GM12878 (cell line): ENCODE measurements at regions of chr20 and their contacts with region 1.

Region 1: GRCh38 chr20:6767536-6768227 is at the start of gene BMP2:
- DNase-seq: no peak
- ATAC-seq: peak; percentile 58
- H3K4me3 ChIP-seq: 0 out of 2 replicates have a peak within 1 kb of the TSS, but pooled peaks have one; percentile 27
- H3K27ac ChIP-seq: no peak within 1 kb of the TSS
- H3K4me1 ChIP-seq: no peaks in the 10 kb centered on the region
- H3K27me3 ChIP-seq: peaks cover 0 to 10% of the 10 kb centered on the region in 2 experiments; a peak in 2 of 4 replicates
- CTCF ChIP-seq: no peak; a peak in 1 of 6 replicates
- EP300 ChIP-seq: no peak
- POLR2A ChIP-seq: no peak
- RAD21 ChIP-seq: no peak
- polyA plus RNA-seq, gene BMP2: 0.57 to 0.74 TPM

Region 2: GRCh38 chr20:6142348-6142993 is 625.2 kb before region 1 on chr20:
- CTCF ChIA-PET with region 1: interaction called, 3 read pairs
- POLR2A ChIA-PET with region 1: no interaction called
- RAD21 ChIA-PET with region 1: no interaction called
- SMC1A ChIA-PET with region 1: no interaction called
- in situ Hi-C with region 1: no loop called
- intact Hi-C with region 1: loop called (anchors 5 kb)
- DNase-seq: peak; percentile 9
- ATAC-seq: peak; percentile 91
- H3K4me3 ChIP-seq: no peak overlapping the region
- H3K27ac ChIP-seq: no peak overlapping the region
- H3K4me1 ChIP-seq: no peaks in the 10 kb centered on the region
- H3K27me3 ChIP-seq: no peaks in the 10 kb centered on the region
- CTCF ChIP-seq: peak; percentile 71 to 84 (median 76); a peak in 5 of 6 replicates
- EP300 ChIP-seq: no peak
- POLR2A ChIP-seq: no peak
- RAD21 ChIP-seq: peak; percentile 68

Region 3: GRCh38 chr20:6636209-6637159 is 131.2 kb before region 1 on chr20:
- CTCF ChIA-PET with region 1: interaction called, 25 read pairs
- POLR2A ChIA-PET with region 1: no interaction called
- RAD21 ChIA-PET with region 1: interaction called, 8 read pairs
- SMC1A ChIA-PET with region 1: interaction called, 11 read pairs
- in situ Hi-C with region 1: no loop called
- intact Hi-C with region 1: loop called (anchors 2 kb)
- DNase-seq: no peak
- ATAC-seq: peak; percentile 73
- H3K4me3 ChIP-seq: no peak overlapping the region
- H3K27ac ChIP-seq: no peak overlapping the region
- H3K4me1 ChIP-seq: no peaks in the 10 kb centered on the region
- H3K27me3 ChIP-seq: no peaks in the 10 kb centered on the region
- CTCF ChIP-seq: peak; percentile 24 to 54 (median 25); a peak in 3 of 6 replicates
- EP300 ChIP-seq: no peak
- POLR2A ChIP-seq: no peak
- RAD21 ChIP-seq: peak; percentile 36

Region 4: DNA sequence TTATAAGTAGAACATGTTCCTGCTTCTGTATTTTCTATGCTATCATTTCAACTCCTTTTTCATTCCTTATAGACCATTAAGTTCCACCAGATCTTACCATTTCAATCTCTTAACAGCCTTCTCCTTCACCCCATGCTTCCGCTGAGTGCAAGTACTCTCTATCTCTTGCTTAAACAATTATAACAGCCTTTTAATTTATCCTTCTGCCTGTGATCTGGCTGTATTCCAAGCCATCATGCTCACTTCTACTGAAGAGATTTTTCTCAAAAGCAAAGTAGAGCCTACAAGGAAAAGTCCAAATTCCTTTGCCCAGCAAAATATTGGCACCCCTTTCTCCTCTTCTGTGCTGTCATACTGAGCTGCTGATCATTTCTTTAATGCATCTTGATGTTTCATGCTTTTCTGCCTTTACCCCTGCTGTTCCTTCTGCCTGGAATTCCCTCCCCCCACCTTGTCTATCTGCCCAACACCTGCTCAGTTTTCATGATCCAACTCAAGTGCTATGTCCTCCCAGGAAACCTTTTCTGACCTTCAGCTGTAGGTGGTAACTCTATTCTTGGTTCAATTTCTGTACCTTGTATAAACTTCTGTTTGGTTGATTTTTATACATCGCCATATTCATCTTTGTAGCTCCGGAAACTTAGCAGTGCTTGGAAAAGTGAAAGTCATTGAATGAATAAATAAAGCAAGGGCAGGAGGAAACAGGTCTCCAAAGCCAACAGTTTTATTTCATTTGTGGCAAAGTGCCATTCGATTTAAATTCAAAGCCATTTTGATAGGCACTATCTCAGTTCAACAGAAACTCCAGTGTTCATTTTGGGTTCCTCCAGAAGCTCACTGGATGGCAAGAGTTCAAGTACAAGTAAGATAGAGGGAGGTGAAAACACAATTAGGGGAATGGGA is 10.7 kb before region 1 on chr20:
- CTCF ChIA-PET with region 1: interaction called, 17 read pairs
- POLR2A ChIA-PET with region 1: interaction called, 3 read pairs
- RAD21 ChIA-PET with region 1: no interaction called
- SMC1A ChIA-PET with region 1: interaction called, 12 read pairs
- in situ Hi-C with region 1: no loop called
- intact Hi-C with region 1: no loop called
- DNase-seq: no peak
- ATAC-seq: no peak
- H3K4me3 ChIP-seq: no peak overlapping the region
- H3K27ac ChIP-seq: no peak overlapping the region
- H3K4me1 ChIP-seq: no peaks in the 10 kb centered on the region
- H3K27me3 ChIP-seq: no peaks in the 10 kb centered on the region
- CTCF ChIP-seq: no peak
- EP300 ChIP-seq: no peak
- POLR2A ChIP-seq: no peak
- RAD21 ChIP-seq: no peak

Region 5: GRCh38 chr20:6828794-6829423 is 61.2 kb after region 1 on chr20:
- CTCF ChIA-PET with region 1: interaction called, 22 read pairs
- POLR2A ChIA-PET with region 1: interaction called, 3 read pairs
- RAD21 ChIA-PET with region 1: interaction called, 25 read pairs
- SMC1A ChIA-PET with region 1: interaction called, 16 read pairs
- in situ Hi-C with region 1: no loop called
- intact Hi-C with region 1: loop called (anchors 5 kb)
- DNase-seq: peak; percentile 30
- ATAC-seq: peak; percentile 92
- H3K4me3 ChIP-seq: no peak overlapping the region
- H3K27ac ChIP-seq: no peak overlapping the region
- H3K4me1 ChIP-seq: no peaks in the 10 kb centered on the region
- H3K27me3 ChIP-seq: no peaks in the 10 kb centered on the region; a peak in 1 of 4 replicates
- CTCF ChIP-seq: peak; percentile 57 to 72 (median 63)
- EP300 ChIP-seq: no peak
- POLR2A ChIP-seq: no peak
- RAD21 ChIP-seq: peak; percentile 75

Region 6: DNA sequence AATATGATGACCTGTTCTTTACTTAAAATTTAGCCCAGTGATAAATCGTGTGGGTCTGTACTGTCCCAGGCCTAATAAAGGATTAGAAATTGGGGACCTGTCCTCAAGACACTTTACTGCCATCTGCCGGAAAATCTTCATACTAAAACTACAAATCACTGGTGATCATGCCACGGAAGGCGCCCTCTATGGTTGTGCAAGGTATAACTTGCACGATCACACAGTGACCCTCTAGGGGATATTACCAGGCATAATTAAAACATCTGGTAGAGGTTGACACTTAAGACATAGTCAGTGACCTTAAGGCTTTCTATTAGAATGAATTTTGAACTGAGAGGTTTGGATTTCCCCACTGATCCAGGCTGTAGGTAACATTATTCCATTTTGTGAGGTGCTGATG is 172.4 kb after region 1 on chr20:
- CTCF ChIA-PET with region 1: interaction called, 11 read pairs
- POLR2A ChIA-PET with region 1: interaction called, 3 read pairs
- RAD21 ChIA-PET with region 1: interaction called, 10 read pairs
- SMC1A ChIA-PET with region 1: interaction called, 18 read pairs
- in situ Hi-C with region 1: no loop called
- intact Hi-C with region 1: loop called (anchors 2 kb)
- DNase-seq: no peak
- ATAC-seq: peak; percentile 80
- H3K4me3 ChIP-seq: no peak overlapping the region
- H3K27ac ChIP-seq: no peak overlapping the region
- H3K4me1 ChIP-seq: no peaks in the 10 kb centered on the region
- H3K27me3 ChIP-seq: no peaks in the 10 kb centered on the region
- CTCF ChIP-seq: peak; percentile 16 to 61 (median 28); a peak in 4 of 6 replicates
- EP300 ChIP-seq: no peak
- POLR2A ChIP-seq: no peak
- RAD21 ChIP-seq: peak; percentile 16; the same call in 1 of the 2 replicates

Region 7: GRCh38 chr20:7285918-7286556 is 518.4 kb after region 1 on chr20:
- CTCF ChIA-PET with region 1: interaction called, 90 read pairs
- POLR2A ChIA-PET with region 1: no interaction called
- RAD21 ChIA-PET with region 1: interaction called, 40 read pairs
- SMC1A ChIA-PET with region 1: interaction called, 50 read pairs
- in situ Hi-C with region 1: loop called (anchors 25 kb)
- intact Hi-C with region 1: loop called (anchors 2 kb)
- DNase-seq: peak; percentile 12
- ATAC-seq: peak; percentile 96
- H3K4me3 ChIP-seq: no peak overlapping the region
- H3K27ac ChIP-seq: no peak overlapping the region
- H3K4me1 ChIP-seq: no peaks in the 10 kb centered on the region
- H3K27me3 ChIP-seq: no peaks in the 10 kb centered on the region
- CTCF ChIP-seq: peak; percentile 66 to 83 (median 74)
- EP300 ChIP-seq: no peak
- POLR2A ChIP-seq: no peak
- RAD21 ChIP-seq: peak; percentile 72